ENCODE measurements at regions of chr2 and their contacts with region 1.

Region 1: DNA sequence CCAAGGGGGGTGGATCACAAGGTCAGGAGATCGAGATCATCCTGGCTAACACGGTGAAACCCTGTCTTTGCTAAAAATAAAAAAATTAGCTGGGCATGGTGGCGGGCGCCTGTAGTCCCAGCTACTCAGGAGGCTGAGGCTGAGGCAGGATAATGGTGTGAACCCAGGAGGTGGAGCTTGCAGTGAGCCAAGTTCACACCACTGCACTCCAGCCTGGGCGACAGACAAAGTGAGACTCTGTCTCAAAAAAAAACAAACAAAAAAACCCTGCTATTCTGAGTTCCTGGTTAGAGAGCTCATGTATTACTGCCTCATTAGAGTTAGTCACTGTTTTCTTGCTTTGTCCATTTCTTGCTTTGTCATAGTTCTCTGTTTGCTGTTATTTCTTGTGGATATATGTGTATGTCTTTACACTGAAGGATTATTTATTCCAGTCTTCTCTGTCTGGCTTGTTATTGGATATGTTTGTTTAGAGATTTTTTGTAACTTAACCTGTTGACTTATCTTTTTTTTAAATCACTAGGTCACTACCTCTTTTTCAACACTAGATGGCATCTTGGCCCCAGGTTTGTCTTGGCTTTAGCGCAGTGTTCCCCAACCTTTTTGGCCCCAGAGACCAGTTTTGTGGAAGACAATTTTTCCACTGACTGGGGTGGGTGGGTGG is 17.0 kb downstream of the TTLL4 start:
- DNase-seq: peak; percentile 41
- H3K4me3 ChIP-seq: no peak overlapping the region
- H3K27ac ChIP-seq: no peak overlapping the region
- H3K4me1 ChIP-seq: peaks cover 20% of the 10 kb centered on the region
- H3K27me3 ChIP-seq: no peaks in the 10 kb centered on the region
- CTCF ChIP-seq: peak; percentile 50 to 60

Region 2: GRCh38 chr2:218418717-218419458 is 308.7 kb before region 1 on chr2 and contains the start of gene VIL1:
- CTCF ChIA-PET with region 1: no interaction called
- dilution Hi-C with region 1: no loop called
- in situ Hi-C with region 1: no loop called
- intact Hi-C with region 1: no loop called
- DNase-seq: no peak
- H3K4me3 ChIP-seq: no peak within 1 kb of the TSS
- H3K27ac ChIP-seq: no peak within 1 kb of the TSS
- H3K4me1 ChIP-seq: no peaks in the 10 kb centered on the region
- H3K27me3 ChIP-seq: no peaks in the 10 kb centered on the region
- CTCF ChIP-seq: no peak
- total RNA-seq, gene VIL1: not detected

Region 3: GRCh38 chr2:218710687-218711549 is 16.7 kb before region 1 on chr2 and contains the start of gene TTLL4:
- CTCF ChIA-PET with region 1: interaction called, 4 read pairs
- dilution Hi-C with region 1: no loop called
- in situ Hi-C with region 1: no loop called
- intact Hi-C with region 1: loop called (anchors 1 kb)
- DNase-seq: peak; percentile 93
- H3K4me3 ChIP-seq: peak within 1 kb of the TSS; percentile 91 to 98 (median 97)
- H3K27ac ChIP-seq: peak within 1 kb of the TSS; percentile 89
- H3K4me1 ChIP-seq: peaks cover 6% of the 10 kb centered on the region
- H3K27me3 ChIP-seq: no peaks in the 10 kb centered on the region
- CTCF ChIP-seq: peak; percentile 55 to 86
- total RNA-seq, gene TTLL4: 31.3 to 47.3 TPM